ENCODE measurements at regions of chr7 and their contacts with region 1.

Region 1: DNA sequence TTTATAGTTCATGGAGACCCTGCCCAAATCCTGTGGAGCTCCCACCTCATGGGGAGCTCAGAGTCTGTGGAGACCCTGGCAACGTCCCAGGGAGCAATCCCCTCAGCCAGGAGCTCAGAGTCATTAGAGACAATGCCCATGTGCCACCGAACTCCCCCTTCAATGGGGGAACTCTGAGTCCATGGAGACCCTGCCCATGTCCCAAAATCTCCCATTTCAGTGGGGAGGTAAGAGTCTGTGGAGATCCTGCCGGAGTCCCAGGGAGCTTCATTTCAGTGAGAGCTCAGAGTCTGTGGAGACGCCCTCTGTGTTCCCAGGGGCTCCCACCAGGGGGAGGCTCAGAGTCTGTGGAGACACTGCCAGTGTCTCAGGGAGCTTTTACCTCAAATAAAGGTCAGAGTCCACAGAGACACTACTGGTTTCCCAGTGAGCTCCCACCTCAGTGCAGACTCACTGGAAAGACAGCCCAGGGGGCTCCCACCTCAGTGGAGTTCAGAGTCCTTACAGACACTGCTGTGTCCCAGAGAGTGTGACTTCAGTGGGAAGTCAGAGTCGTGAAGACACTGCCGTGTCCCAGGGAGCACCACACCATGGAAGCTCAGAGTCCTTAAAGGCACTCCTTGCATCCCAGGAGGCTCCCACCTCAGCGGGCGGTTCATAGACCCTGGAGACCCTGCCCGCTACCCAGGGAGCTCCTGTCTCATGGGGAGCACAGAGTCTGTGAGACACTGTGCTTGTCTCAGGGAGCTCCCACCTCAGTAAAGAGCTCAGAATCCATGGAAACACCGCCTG is 5.0 kb downstream of the MYO1G start:
- DNase-seq: peak; percentile 40 to 76 (median 41)
- H3K4me3 ChIP-seq: no peak overlapping the region
- H3K4me3 Mint-ChIP-seq: peak overlapping the region in 2 of 7 donors; percentile 50 to 56
- H3K27ac ChIP-seq: peak overlapping the region; percentile 1
- H3K27ac Mint-ChIP-seq: peak overlapping the region; percentile 29 to 96 (median 63)
- H3K4me1 ChIP-seq: peaks cover 54% of the 10 kb centered on the region
- H3K4me1 Mint-ChIP-seq: peaks cover 28 to 64% (median 30%) of the 10 kb centered on the region in 3 donors
- H3K27me3 ChIP-seq: no peaks in the 10 kb centered on the region
- H3K27me3 Mint-ChIP-seq: no peaks in the 10 kb centered on the region

Region 2: GRCh38 chr7:44858161-44858560 is 115.6 kb before region 1 on chr7:
- CTCF ChIA-PET with region 1: interaction called, 12 read pairs
- POLR2A ChIA-PET with region 1: no interaction called
- DNase-seq: no peak
- H3K4me3 ChIP-seq: no peak overlapping the region
- H3K4me3 Mint-ChIP-seq: no peak overlapping the region
- H3K27ac ChIP-seq: no peak overlapping the region
- H3K27ac Mint-ChIP-seq: no peak overlapping the region
- H3K4me1 ChIP-seq: no peaks in the 10 kb centered on the region
- H3K4me1 Mint-ChIP-seq: peaks cover 3 to 6% (median 5%) of the 10 kb centered on the region in 3 donors
- H3K27me3 ChIP-seq: no peaks in the 10 kb centered on the region
- H3K27me3 Mint-ChIP-seq: peaks cover 0 to 12% of the 10 kb centered on the region in 2 donors

Region 3: DNA sequence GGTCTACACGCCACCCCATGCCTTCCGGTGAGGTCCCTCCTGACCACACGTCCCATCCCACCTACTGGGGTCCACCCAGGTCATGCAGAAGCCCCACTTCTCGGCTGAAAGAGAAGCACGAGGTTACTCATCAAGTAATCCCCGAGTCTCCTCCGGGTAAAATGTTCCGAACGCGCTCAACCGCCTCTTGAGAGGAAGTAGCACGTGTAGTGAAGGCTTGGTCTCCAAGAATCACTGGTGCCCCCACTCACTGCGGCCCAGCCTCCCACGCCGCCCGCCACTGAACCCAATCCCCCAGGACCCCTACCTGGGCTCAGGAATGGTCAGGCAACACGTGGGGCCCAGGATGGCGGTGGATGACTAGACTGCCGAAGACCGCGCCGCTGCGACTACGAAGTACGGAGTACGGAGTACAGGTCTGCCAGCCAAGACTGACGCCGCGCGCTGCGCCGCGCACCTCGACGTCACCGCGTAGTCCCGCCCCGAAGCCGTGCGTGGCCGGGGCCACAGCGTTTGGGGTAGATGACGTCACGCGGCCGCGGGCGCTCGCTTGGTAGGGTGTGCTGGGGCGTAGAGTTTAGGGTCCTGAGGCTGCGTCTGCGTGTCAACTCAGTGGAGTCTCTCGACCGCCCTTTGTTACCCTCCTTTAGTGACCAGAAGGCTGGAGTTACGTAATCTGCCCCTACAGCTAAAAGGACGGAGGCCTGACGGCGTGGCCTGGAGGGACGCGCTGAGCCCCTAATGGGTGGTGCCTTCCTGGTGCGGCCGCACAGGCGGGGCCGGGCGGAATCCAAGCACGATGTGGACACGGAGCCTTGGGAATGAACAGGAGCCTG is 12.6 kb after region 1 on chr7:
- CTCF ChIA-PET with region 1: interaction called, 24 read pairs
- POLR2A ChIA-PET with region 1: interaction called, 4 read pairs
- DNase-seq: peak; percentile 91 to 97 (median 94)
- H3K4me3 ChIP-seq: peak overlapping the region; percentile 90
- H3K4me3 Mint-ChIP-seq: peak overlapping the region; percentile 91 to 98 (median 97)
- H3K27ac ChIP-seq: peak overlapping the region; percentile 94
- H3K27ac Mint-ChIP-seq: peak overlapping the region; percentile 93 to 100 (median 99)
- H3K4me1 ChIP-seq: peaks cover 42% of the 10 kb centered on the region
- H3K4me1 Mint-ChIP-seq: peaks cover 49 to 64% (median 58%) of the 10 kb centered on the region in 3 donors
- H3K27me3 ChIP-seq: no peaks in the 10 kb centered on the region
- H3K27me3 Mint-ChIP-seq: no peaks in the 10 kb centered on the region

Region 4: DNA sequence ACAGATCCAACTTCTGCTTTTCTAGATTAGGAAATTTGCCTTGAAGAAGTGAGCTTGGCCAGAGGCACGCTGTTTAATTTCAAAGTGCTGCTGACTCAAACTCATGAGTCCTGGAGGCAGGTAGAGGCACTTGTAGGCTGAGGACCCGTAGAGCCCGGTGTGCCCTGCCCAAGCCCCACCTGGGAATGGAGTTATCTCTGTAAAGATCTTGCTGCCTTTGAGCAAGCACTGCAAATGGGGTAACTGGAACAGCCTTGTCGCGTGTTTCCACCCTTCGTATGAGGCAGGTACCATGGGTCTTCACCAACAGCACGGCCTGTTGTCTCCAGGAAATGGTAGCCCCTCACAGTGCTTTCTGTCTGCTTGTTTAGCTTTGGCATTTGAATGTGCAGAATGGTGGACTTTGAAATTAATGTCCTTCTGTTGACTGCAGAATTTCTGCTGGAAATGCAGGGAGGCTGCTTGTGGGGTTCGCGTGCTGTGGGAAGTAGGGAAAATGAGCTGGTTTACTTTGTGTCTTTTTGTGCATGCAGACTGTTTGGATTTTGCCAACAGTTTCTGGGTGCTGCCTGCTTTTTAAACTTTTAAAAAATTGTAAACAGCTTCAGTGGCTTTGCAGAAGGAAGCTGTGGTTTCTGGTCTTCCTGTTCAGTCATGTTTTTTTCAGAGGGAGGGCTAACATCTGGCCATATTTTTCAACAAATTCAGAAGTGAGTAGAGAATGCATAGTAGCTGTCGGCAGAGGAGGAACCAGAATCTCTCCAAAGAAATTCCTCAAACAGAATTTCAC is 53.4 kb after region 1 on chr7:
- CTCF ChIA-PET with region 1: interaction called, 51 read pairs
- POLR2A ChIA-PET with region 1: interaction called, 10 read pairs
- DNase-seq: peak in 3 of 5 donors; percentile 59 to 75 (median 60)
- H3K4me3 ChIP-seq: peak overlapping the region; percentile 100
- H3K4me3 Mint-ChIP-seq: peak overlapping the region; percentile 83 to 98 (median 91)
- H3K27ac ChIP-seq: peak overlapping the region; percentile 87
- H3K27ac Mint-ChIP-seq: peak overlapping the region; percentile 62 to 99 (median 93)
- H3K4me1 ChIP-seq: peaks cover 49% of the 10 kb centered on the region
- H3K4me1 Mint-ChIP-seq: peaks cover 54 to 74% (median 72%) of the 10 kb centered on the region in 3 donors
- H3K27me3 ChIP-seq: no peaks in the 10 kb centered on the region
- H3K27me3 Mint-ChIP-seq: no peaks in the 10 kb centered on the region

Region 5: GRCh38 chr7:45111298-45112223 is 137.8 kb after region 1 on chr7 and contains the start of gene TBRG4:
- CTCF ChIA-PET with region 1: interaction called, 14 read pairs
- POLR2A ChIA-PET with region 1: interaction called, 5 read pairs
- DNase-seq: peak; percentile 89 to 95 (median 92)
- H3K4me3 ChIP-seq: peak within 1 kb of the TSS; percentile 87
- H3K4me3 Mint-ChIP-seq: peak within 1 kb of the TSS; percentile 93 to 98 (median 95)
- H3K27ac ChIP-seq: peak within 1 kb of the TSS; percentile 95
- H3K27ac Mint-ChIP-seq: peak within 1 kb of the TSS; percentile 95 to 100 (median 98)
- H3K4me1 ChIP-seq: peaks cover 52% of the 10 kb centered on the region
- H3K4me1 Mint-ChIP-seq: peaks cover 44 to 56% (median 48%) of the 10 kb centered on the region in 3 donors
- H3K27me3 ChIP-seq: no peaks in the 10 kb centered on the region
- H3K27me3 Mint-ChIP-seq: peaks cover 6 to 8% of the 10 kb centered on the region in 2 donors
- total RNA-seq, gene TBRG4: 198 to 203 TPM

Region 6: GRCh38 chr7:45259966-45260646 is 286.3 kb after region 1 on chr7:
- CTCF ChIA-PET with region 1: no interaction called
- POLR2A ChIA-PET with region 1: no interaction called
- DNase-seq: peak; percentile 43 to 67 (median 50)
- H3K4me3 ChIP-seq: no peak overlapping the region
- H3K4me3 Mint-ChIP-seq: no peak overlapping the region
- H3K27ac ChIP-seq: no peak overlapping the region
- H3K27ac Mint-ChIP-seq: no peak overlapping the region
- H3K4me1 ChIP-seq: no peaks in the 10 kb centered on the region
- H3K4me1 Mint-ChIP-seq: peaks cover 0 to 8% (median 0%) of the 10 kb centered on the region in 3 donors
- H3K27me3 ChIP-seq: no peaks in the 10 kb centered on the region
- H3K27me3 Mint-ChIP-seq: peaks cover 13 to 28% of the 10 kb centered on the region in 2 donors

Region 7: GRCh38 chr7:45295222-45295621 is 321.4 kb after region 1 on chr7:
- CTCF ChIA-PET with region 1: no interaction called
- POLR2A ChIA-PET with region 1: no interaction called
- DNase-seq: no peak
- H3K4me3 ChIP-seq: no peak overlapping the region
- H3K4me3 Mint-ChIP-seq: no peak overlapping the region
- H3K27ac ChIP-seq: no peak overlapping the region
- H3K27ac Mint-ChIP-seq: no peak overlapping the region
- H3K4me1 ChIP-seq: no peaks in the 10 kb centered on the region
- H3K4me1 Mint-ChIP-seq: no peaks in the 10 kb centered on the region
- H3K27me3 ChIP-seq: peaks cover 3% of the 10 kb centered on the region
- H3K27me3 Mint-ChIP-seq: peaks cover 14 to 73% of the 10 kb centered on the region in 2 donors

Measured in CD8-positive, alpha-beta memory T cell (primary cell).